GM10248 (cell line): ENCODE measurements at regions of chr15 and their contacts with region 1.

Region 1: GRCh38 chr15:53962332-53963241 is 15.7 kb upstream of the UNC13C start:
- DNase-seq: no peak
- CTCF ChIP-seq: peak; percentile 56

Region 2: DNA sequence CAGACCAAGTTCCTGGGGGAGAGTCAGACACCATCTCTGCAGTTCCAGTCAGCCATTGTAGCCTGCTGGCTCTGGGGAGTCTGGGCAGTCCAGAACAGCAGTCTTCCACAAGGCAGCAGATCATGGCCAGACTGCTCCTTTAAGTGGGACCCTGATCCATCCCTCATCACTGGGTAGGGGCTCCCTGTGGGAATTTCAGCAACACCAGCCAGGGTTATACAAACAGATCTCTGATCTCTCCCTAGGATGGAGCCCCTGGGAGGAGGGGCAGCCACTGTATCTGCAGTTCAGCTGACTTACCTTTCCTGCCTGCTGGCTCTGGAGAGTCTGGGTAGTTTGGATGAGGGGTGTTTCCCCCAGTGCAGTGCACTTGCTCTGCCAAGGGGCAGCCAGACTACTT is 26.4 kb before region 1 on chr15:
- CTCF ChIA-PET with region 1: no interaction called
- POLR2A ChIA-PET with region 1: no interaction called
- DNase-seq: no peak
- CTCF ChIP-seq: no peak

Region 3: DNA sequence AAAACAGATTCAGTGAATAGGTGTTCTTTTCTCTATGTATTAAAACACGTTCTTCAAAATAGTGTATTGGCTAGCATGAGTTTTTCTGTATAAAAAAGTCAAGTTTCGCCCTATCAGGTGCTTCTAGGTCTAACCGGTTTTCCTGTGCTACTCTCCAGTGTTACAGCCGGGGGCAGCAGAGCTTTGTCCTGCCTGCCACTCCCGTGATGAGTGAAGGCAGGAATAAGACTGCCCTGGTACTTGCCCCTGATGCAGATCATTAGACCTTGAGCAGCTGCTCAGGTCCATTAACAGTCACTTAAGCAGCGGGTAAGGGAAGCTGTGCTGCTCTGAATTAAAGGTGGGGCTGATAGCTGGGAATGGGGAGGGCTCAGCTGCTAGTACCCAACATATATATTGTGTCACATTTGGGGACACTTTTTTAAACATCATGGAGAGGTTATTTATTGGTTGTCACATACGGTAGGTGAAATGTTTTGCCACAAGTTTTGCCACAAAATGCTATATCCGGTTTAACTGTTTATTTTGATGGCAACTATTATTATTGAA is 14.3 kb after region 1 on chr15:
- CTCF ChIA-PET with region 1: interaction called, 14 read pairs
- POLR2A ChIA-PET with region 1: no interaction called
- DNase-seq: no peak
- CTCF ChIP-seq: no peak